Naive thymus-derived CD4-positive, alpha-beta T cell (primary cell): ENCODE measurements at regions of chr16 and their contacts with region 1.

Region 1: DNA sequence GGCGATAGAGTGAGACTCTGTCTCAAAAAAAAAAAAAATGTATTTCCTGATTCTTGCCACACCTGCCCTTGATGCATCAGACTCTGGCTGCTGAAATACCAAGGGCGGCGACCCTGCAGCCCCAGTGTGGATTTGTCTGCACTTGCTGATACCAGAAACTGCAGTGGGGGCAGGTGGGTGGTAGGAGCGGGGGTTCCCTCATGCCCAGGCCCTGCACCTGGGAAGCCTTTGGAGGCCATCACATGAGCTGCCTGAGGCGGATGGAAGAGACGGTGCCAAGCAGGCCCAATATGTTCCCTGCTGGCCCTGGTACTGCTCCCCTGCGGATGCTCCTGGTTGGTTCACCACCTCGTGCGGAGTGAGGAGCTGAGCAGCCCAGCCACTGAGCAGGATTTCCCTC is 50.6 kb downstream of the MARF1 start:
- DNase-seq: no peak
- ATAC-seq: no peak
- H3K4me3 ChIP-seq: no peak overlapping the region
- H3K4me3 Mint-ChIP-seq: peak overlapping the region in 2 of 10 donors; percentile 20 to 39
- H3K27ac ChIP-seq: peak overlapping the region; percentile 37
- H3K27ac Mint-ChIP-seq: peak overlapping the region; percentile 40 to 98 (median 84)
- H3K4me1 ChIP-seq: peaks cover 20 to 24% of the 10 kb centered on the region in 2 donors
- H3K4me1 Mint-ChIP-seq: peaks cover 13 to 59% (median 27%) of the 10 kb centered on the region in 7 donors
- H3K27me3 ChIP-seq: no peaks in the 10 kb centered on the region
- H3K27me3 Mint-ChIP-seq: no peaks in the 10 kb centered on the region

Region 2: GRCh38 chr16:15427648-15428239 is 164.6 kb before region 1 on chr16:
- CTCF ChIA-PET with region 1: interaction called, 3 read pairs
- POLR2A ChIA-PET with region 1: no interaction called
- intact Hi-C with region 1: loop called in 1 of 2 experiments (anchors 2 kb)
- DNase-seq: peak in 7 of 9 donors; percentile 12 to 42 (median 31)
- ATAC-seq: peak; percentile 61
- H3K4me3 ChIP-seq: no peak overlapping the region
- H3K4me3 Mint-ChIP-seq: no peak overlapping the region
- H3K27ac ChIP-seq: no peak overlapping the region
- H3K27ac Mint-ChIP-seq: no peak overlapping the region
- H3K4me1 ChIP-seq: no peaks in the 10 kb centered on the region
- H3K4me1 Mint-ChIP-seq: peaks cover 0 to 2% (median 0%) of the 10 kb centered on the region in 7 donors
- H3K27me3 ChIP-seq: no peaks in the 10 kb centered on the region
- H3K27me3 Mint-ChIP-seq: peaks cover 0 to 7% (median under 1%) of the 10 kb centered on the region in 5 donors

Region 3: GRCh38 chr16:15548482-15548891 is 43.8 kb before region 1 on chr16:
- CTCF ChIA-PET with region 1: no interaction called
- POLR2A ChIA-PET with region 1: interaction called, 3 read pairs
- intact Hi-C with region 1: loop called in 1 of 2 experiments (anchors 5 kb)
- DNase-seq: no peak
- ATAC-seq: no peak
- H3K4me3 ChIP-seq: no peak overlapping the region
- H3K4me3 Mint-ChIP-seq: no peak overlapping the region
- H3K27ac ChIP-seq: no peak overlapping the region
- H3K27ac Mint-ChIP-seq: no peak overlapping the region
- H3K4me1 ChIP-seq: no peaks in the 10 kb centered on the region
- H3K4me1 Mint-ChIP-seq: peaks cover 0 to 6% (median 0%) of the 10 kb centered on the region in 7 donors
- H3K27me3 ChIP-seq: no peaks in the 10 kb centered on the region
- H3K27me3 Mint-ChIP-seq: no peaks in the 10 kb centered on the region

Region 4: GRCh38 chr16:15650019-15650697 is 57.8 kb after region 1 on chr16 and contains the start of gene NDE1:
- CTCF ChIA-PET with region 1: no interaction called
- POLR2A ChIA-PET with region 1: interaction called, 3 read pairs
- intact Hi-C with region 1: loop called in 1 of 2 experiments (anchors 1 kb)
- DNase-seq: peak; percentile 65 to 85 (median 76)
- ATAC-seq: peak; percentile 99
- H3K4me3 ChIP-seq: peak within 1 kb of the TSS; percentile 84
- H3K4me3 Mint-ChIP-seq: peak within 1 kb of the TSS; percentile 98 to 100 (median 99)
- H3K27ac ChIP-seq: peak within 1 kb of the TSS; percentile 98
- H3K27ac Mint-ChIP-seq: peak within 1 kb of the TSS; percentile 93 to 99 (median 99)
- H3K4me1 ChIP-seq: peaks cover 7 to 14% of the 10 kb centered on the region in 2 donors
- H3K4me1 Mint-ChIP-seq: peaks cover 10 to 37% (median 35%) of the 10 kb centered on the region in 7 donors
- H3K27me3 ChIP-seq: no peaks in the 10 kb centered on the region
- H3K27me3 Mint-ChIP-seq: peaks cover 0 to 2% (median 0%) of the 10 kb centered on the region in 5 donors
- total RNA-seq, gene NDE1: 100.0 to 128 (median 114) TPM

Region 5: GRCh38 chr16:15672514-15673167 is 80.3 kb after region 1 on chr16:
- CTCF ChIA-PET with region 1: no interaction called
- POLR2A ChIA-PET with region 1: interaction called, 3 read pairs
- intact Hi-C with region 1: loop called in 1 of 2 experiments (anchors 1 kb)
- DNase-seq: peak; percentile 52 to 93 (median 89)
- ATAC-seq: peak; percentile 96
- H3K4me3 ChIP-seq: peak overlapping the region; percentile 32
- H3K4me3 Mint-ChIP-seq: peak overlapping the region; percentile 60 to 86 (median 75)
- H3K27ac ChIP-seq: peak overlapping the region; percentile 86
- H3K27ac Mint-ChIP-seq: peak overlapping the region; percentile 94 to 97 (median 97)
- H3K4me1 ChIP-seq: peaks cover 18 to 27% of the 10 kb centered on the region in 2 donors
- H3K4me1 Mint-ChIP-seq: peaks cover 32 to 57% (median 42%) of the 10 kb centered on the region in 7 donors
- H3K27me3 ChIP-seq: no peaks in the 10 kb centered on the region
- H3K27me3 Mint-ChIP-seq: no peaks in the 10 kb centered on the region

Region 6: GRCh38 chr16:15704545-15704987 is 112.2 kb after region 1 on chr16:
- CTCF ChIA-PET with region 1: no interaction called
- POLR2A ChIA-PET with region 1: no interaction called
- intact Hi-C with region 1: loop called in 1 of 2 experiments (anchors 5 kb)
- DNase-seq: peak; percentile 48 to 73 (median 66)
- ATAC-seq: peak; percentile 88
- H3K4me3 ChIP-seq: no peak overlapping the region
- H3K4me3 Mint-ChIP-seq: no peak overlapping the region
- H3K27ac ChIP-seq: no peak overlapping the region
- H3K27ac Mint-ChIP-seq: peak overlapping the region; percentile 5 to 93 (median 63)
- H3K4me1 ChIP-seq: no peaks in the 10 kb centered on the region
- H3K4me1 Mint-ChIP-seq: peaks cover 3 to 22% (median 20%) of the 10 kb centered on the region in 7 donors
- H3K27me3 ChIP-seq: no peaks in the 10 kb centered on the region
- H3K27me3 Mint-ChIP-seq: no peaks in the 10 kb centered on the region

Region 7: DNA sequence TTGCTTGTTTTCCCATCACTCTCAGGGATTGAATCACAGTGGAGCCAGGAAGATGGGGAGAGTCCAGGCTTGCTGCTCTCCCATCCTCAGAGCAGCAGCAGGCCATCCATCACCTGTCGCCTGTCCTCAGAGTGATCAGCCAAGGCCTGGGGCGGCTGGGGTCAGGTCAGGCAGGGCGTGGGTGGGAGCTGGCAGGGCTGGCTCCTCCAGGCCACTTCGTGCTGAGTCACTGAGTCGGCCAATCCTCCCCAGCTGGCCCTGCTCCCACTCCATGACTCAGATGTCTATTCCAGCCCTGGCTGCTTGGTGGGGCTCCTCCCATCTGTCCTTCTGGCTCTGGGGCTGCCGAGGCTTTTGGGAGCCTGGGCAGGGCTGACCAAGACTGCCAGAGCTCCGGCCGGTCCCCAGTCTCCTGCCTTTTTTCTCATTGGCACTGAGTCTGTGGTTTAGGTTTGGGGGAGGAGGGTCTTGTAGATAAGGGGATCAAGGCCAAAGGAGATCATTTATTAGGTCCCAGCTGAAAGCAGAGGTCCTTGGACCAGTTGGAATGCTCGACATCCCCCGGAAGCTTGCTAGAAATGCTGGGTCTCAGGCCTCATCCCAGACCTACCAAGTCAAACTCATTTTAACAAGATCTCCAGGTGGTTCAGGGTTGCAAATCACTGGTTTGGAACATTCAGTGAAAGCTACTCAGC is 429.8 kb after region 1 on chr16:
- CTCF ChIA-PET with region 1: no interaction called
- POLR2A ChIA-PET with region 1: no interaction called
- intact Hi-C with region 1: no loop called
- DNase-seq: no peak
- ATAC-seq: peak; percentile 39
- H3K4me3 ChIP-seq: no peak overlapping the region
- H3K4me3 Mint-ChIP-seq: no peak overlapping the region
- H3K27ac ChIP-seq: no peak overlapping the region
- H3K27ac Mint-ChIP-seq: peak overlapping the region in 5 of 9 donors; percentile 20 to 65 (median 34)
- H3K4me1 ChIP-seq: peaks cover 9 to 14% of the 10 kb centered on the region in 2 donors
- H3K4me1 Mint-ChIP-seq: peaks cover 12 to 53% (median 22%) of the 10 kb centered on the region in 7 donors
- H3K27me3 ChIP-seq: no peaks in the 10 kb centered on the region
- H3K27me3 Mint-ChIP-seq: no peaks in the 10 kb centered on the region